ENCODE measurements at regions of chr6 and their contacts with region 1.

Region 1: GRCh38 chr6:110296241-110297025 is 61.7 kb downstream of the METTL24 start:
- DNase-seq: peak; percentile 92
- H3K4me3 ChIP-seq: peak overlapping the region; percentile 35
- H3K27ac ChIP-seq: peak overlapping the region; percentile 98
- H3K4me1 ChIP-seq: peaks cover 63% of the 10 kb centered on the region
- H3K27me3 ChIP-seq: no peaks in the 10 kb centered on the region
- CTCF ChIP-seq: no peak

Region 2: DNA sequence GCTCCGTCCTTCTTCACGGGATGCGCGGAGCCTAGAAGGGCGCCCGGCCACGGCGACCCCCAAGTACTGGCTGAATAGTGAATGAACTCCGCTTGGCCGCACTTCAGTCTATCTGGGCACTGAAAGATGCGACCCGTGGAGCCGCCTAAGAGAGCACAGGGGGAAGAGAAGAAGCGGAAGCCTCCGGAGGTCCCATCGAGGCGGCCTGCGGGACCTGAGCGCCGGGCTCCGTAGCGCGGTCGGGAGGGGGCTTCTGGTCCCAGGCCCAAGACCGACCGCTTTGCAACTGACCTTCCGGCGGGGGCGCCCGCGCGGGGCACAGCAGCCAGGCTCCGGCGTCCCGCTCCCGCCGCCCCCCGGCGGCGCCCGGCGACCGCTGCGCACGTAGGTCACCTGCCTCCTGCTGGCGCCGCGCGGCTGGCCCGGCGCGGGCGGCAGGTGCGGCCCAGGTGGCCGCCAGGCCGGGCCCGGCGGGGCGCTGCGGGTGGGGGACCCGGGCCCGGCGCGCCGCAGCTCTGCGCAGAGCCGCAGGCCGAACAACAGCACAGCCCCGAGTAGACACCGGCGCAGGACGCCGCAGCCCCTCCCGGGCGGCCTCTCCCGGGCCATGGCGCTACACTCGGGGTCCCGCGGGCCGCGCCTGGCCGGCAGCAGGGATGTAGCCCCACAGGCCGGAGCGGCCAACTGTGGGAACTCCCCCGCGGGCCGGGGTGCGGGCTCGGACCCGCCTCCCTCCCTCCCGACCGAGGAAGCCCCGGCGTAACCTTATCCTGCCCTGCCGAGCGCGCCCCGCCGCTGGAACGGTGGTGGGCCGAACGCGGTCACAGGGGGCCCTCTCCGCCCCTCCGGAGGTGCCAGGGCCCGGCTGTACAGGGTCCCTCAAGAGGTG is 61.5 kb after region 1 on chr6 and contains the start of gene METTL24:
- CTCF ChIA-PET with region 1: no interaction called
- POLR2A ChIA-PET with region 1: no interaction called
- intact Hi-C with region 1: loop called (anchors 1 kb)
- DNase-seq: peak; percentile 49
- H3K4me3 ChIP-seq: peak within 1 kb of the TSS; percentile 51
- H3K27ac ChIP-seq: peak within 1 kb of the TSS; percentile 76
- H3K4me1 ChIP-seq: peaks cover 50% of the 10 kb centered on the region
- H3K27me3 ChIP-seq: no peaks in the 10 kb centered on the region
- CTCF ChIP-seq: no peak
- total RNA-seq, gene METTL24: 6.4 and 9.0 TPM in 2 replicates